Activated naive CD4-positive, alpha-beta T cell treated with anti-CD3 and anti-CD28 coated beads for 36 hours (primary cell): ENCODE measurements at regions of chr4 and their contacts with region 1.

Region 1: GRCh38 chr4:53196882-53197771 is 168.7 kb downstream of the SCFD2 start:
- DNase-seq: no peak
- H3K4me3 Mint-ChIP-seq: no peak overlapping the region
- H3K27ac Mint-ChIP-seq: no peak overlapping the region
- H3K4me1 Mint-ChIP-seq: no peaks in the 10 kb centered on the region
- H3K27me3 Mint-ChIP-seq: no peaks in the 10 kb centered on the region

Region 2: GRCh38 chr4:53015681-53016080 is 181.4 kb before region 1 on chr4:
- CTCF ChIA-PET with region 1: interaction called, 8 read pairs
- intact Hi-C with region 1: loop called (anchors 2 kb)
- DNase-seq: peak; percentile 49
- H3K4me3 Mint-ChIP-seq: no peak overlapping the region
- H3K27ac Mint-ChIP-seq: no peak overlapping the region
- H3K4me1 Mint-ChIP-seq: peaks cover 36% of the 10 kb centered on the region
- H3K27me3 Mint-ChIP-seq: no peaks in the 10 kb centered on the region

Region 3: GRCh38 chr4:53365486-53366300 is 168.6 kb after region 1 on chr4 and contains the start of gene SCFD2:
- CTCF ChIA-PET with region 1: no interaction called
- intact Hi-C with region 1: loop called (anchors 5 kb)
- DNase-seq: peak; percentile 99
- H3K4me3 Mint-ChIP-seq: peak within 1 kb of the TSS; percentile 96
- H3K27ac Mint-ChIP-seq: peak within 1 kb of the TSS; percentile 96
- H3K4me1 Mint-ChIP-seq: peaks cover 38% of the 10 kb centered on the region
- H3K27me3 Mint-ChIP-seq: peaks cover 3% of the 10 kb centered on the region
- total RNA-seq, gene SCFD2: 14.3 to 15.1 TPM

Region 4: DNA sequence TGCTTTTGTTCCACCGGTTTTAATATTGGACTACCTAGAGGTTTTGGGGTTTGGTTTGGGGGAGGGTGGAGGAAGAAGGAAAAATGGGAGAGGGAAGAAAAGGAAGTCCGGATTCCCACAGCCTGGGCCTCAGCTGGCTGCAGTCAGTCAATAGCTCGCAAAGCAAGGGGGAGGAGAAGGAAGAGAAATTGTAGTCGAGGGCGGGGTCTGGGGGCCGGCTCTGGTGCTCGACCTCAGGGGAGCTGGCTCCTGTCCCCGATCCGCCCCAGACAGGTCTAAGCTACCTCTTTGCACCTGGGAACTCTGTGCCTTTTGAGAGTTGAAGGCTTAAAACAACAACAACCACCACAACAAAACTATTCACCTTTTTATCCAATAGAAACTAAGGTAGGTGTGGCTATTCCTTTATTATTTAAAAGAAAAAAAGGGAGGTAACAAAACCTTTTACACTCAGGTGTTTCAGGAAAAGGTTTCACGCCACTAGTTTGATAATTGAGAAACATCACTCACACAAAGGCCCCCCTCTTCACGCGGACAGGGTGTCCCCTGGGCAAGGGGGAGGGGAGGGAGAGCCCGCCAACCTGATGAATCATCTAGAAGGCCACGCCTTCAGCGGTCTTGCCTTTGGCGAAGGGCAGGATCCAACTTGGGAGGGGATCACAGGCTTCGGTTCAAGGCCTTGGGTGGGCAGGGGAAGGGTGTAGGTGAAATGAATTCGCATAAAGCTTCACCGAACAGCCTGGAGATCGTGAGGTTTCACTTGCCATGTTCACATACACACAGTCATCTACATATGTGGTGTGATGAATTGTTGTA is 395.8 kb after region 1 on chr4:
- CTCF ChIA-PET with region 1: no interaction called
- intact Hi-C with region 1: loop called (anchors 10 kb)
- DNase-seq: no peak
- H3K4me3 Mint-ChIP-seq: no peak overlapping the region
- H3K27ac Mint-ChIP-seq: no peak overlapping the region
- H3K4me1 Mint-ChIP-seq: peaks cover 12% of the 10 kb centered on the region
- H3K27me3 Mint-ChIP-seq: peaks cover 50% of the 10 kb centered on the region

Region 5: DNA sequence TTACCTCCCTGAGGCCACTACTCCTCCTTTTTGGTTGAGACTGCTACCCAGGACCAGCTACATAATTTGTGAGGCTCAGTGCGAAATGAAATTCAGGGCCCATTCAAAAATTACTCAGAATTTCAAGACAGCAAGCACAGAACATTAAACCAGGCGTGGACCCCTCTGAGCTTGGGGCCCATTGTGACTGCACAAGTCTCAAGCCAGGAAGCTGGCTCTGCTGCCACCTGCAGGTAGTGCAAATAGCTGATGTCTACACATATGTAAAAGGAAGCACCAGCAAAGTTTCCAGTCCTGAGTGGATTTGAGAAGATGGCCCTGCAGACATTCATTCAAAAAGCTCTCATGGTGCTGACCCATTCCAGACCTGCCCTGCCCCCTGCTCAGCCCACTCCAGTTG is 607.6 kb after region 1 on chr4:
- CTCF ChIA-PET with region 1: no interaction called
- intact Hi-C with region 1: loop called (anchors 1 kb)
- DNase-seq: peak; percentile 45
- H3K4me3 Mint-ChIP-seq: no peak overlapping the region
- H3K27ac Mint-ChIP-seq: no peak overlapping the region
- H3K4me1 Mint-ChIP-seq: no peaks in the 10 kb centered on the region
- H3K27me3 Mint-ChIP-seq: peaks cover 2% of the 10 kb centered on the region